ENCODE measurements at regions of chr7 and their contacts with region 1.

Region 1: DNA sequence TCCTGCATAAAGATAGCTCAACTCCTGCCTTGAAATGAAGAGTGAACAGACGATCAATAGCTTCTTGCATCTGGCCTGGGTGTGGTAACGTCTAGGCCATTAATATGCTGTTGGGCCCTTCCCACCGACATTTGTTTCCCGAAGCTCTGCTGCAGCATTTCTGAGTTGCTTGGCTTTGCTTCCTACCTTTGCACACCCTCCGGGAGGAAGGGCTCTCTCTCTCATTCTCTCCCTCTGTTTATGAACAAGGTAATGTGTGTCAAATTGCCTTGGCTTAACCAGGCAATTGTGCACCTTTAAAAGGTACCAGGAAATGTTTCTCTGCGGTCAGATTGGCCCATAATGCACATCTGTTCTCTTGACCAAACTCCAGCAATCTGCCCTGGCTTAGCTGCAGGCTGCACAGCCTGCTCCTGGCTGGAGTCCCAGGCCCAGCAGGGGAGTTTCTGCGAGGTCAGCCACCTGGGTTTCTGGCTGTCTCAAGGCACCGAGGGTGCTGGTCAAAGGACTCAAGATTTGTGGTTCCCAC is 223.7 kb downstream of the SNX10 start:
- DNase-seq: peak; percentile 52
- H3K4me3 ChIP-seq: no peak overlapping the region
- H3K27ac ChIP-seq: no peak overlapping the region; a peak in 1 of 4 replicates
- H3K4me1 ChIP-seq: peaks cover 0 to 13% of the 10 kb centered on the region in 2 experiments; a peak in 1 of 4 replicates
- H3K27me3 ChIP-seq: 0 out of 2 replicates have a peak, but pooled peaks cover 9% of the 10 kb centered on the region
- CTCF ChIP-seq: no peak
- EP300 ChIP-seq: no peak
- RAD21 ChIP-seq: no peak

Region 2: DNA sequence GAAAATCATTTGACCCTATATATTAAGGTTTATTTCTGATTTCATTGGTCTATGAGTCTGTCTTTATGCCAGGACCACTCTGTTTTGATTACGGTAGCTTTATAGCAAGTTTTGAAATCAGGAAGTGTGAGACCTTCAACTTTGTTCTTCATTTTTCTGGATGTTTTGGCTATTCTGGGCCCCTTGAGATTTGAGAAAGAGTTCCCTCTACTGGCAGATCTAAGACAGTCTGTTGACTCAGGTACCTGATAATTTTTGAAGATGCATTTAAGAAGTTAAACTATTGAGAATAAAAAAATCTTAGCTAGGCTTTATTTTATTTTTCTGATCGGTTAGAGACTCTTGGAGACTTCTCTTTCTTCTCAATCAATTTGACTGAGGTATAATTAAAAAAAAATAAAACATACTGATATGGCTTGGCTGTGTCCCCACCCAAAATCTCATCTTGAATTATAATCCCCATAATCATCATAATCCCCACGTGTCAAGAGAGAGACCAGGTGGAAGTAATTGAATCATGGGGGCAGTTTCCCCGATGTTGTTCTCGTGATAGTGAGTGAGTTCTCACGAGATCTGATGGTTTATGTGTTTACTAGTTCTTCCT is 14.5 kb before region 1 on chr7:
- CTCF ChIA-PET with region 1: interaction called, 12 read pairs
- POLR2A ChIA-PET with region 1: no interaction called
- DNase-seq: peak; percentile 55
- H3K4me3 ChIP-seq: no peak overlapping the region; a peak in 1 of 4 replicates
- H3K27ac ChIP-seq: no peak overlapping the region
- H3K4me1 ChIP-seq: no peaks in the 10 kb centered on the region
- H3K27me3 ChIP-seq: no peaks in the 10 kb centered on the region; the same call in 1 of the 2 replicates
- CTCF ChIP-seq: peak; percentile 65
- EP300 ChIP-seq: no peak
- RAD21 ChIP-seq: peak; percentile 80

Measured in SK-N-SH (cell line).